ENCODE measurements at regions of chr7 and their contacts with region 1.

Region 1: DNA sequence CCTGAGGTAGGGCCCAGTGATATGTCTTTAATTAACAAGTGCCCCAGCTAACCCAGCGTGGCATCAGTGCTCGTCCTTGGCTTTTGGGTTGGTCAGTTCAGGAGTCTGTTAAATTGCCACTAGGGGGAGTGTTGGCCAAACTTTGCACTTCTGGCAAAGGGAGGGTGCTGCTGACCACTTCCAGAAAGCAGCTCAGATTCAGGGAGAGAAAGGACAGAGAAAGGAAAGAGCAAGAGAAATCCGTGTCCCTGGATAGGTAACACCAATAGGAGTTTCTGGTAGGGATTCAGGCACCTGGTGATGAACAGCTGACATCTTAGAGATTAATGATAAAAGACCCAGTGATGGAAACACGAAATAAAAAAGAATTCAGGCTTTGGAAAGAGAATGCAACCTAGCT is 243.1 kb upstream of the AOAH start:
- DNase-seq: peak; percentile 7
- H3K4me3 ChIP-seq: no peak overlapping the region
- CTCF ChIP-seq: peak; percentile 83

Region 2: DNA sequence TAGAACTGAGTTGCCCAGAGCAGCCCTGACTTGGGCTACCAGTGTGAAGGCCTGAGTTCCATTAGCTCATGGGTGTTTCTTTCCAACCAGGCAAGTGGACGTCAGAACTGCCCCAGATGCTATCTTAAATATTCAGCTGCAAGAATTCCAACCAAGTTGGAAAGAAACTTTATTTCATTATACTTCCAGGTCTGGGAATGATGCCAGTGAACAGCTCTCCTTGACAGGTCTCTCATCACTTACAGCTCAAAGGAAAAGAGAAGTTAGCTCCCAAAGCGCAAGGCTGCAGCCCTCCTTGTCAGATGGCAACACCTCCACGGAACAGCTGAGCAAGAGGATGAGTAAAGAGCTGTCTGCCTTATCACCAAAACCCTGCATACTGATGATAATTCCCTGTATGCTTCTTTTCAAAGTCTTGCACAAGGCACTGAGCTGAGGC is 12.4 kb after region 1 on chr7:
- CTCF ChIA-PET with region 1: interaction called, 47 read pairs
- POLR2A ChIA-PET with region 1: no interaction called
- DNase-seq: no peak
- H3K4me3 ChIP-seq: no peak overlapping the region
- CTCF ChIP-seq: no peak

Region 3: GRCh38 chr7:36986429-36987362 is 19.3 kb after region 1 on chr7:
- CTCF ChIA-PET with region 1: interaction called, 47 read pairs
- POLR2A ChIA-PET with region 1: no interaction called
- DNase-seq: no peak
- H3K4me3 ChIP-seq: no peak overlapping the region
- CTCF ChIP-seq: peak; percentile 93

Region 4: GRCh38 chr7:37173670-37174069 is 206.3 kb after region 1 on chr7:
- CTCF ChIA-PET with region 1: interaction called, 157 read pairs
- POLR2A ChIA-PET with region 1: no interaction called
- DNase-seq: no peak
- H3K4me3 ChIP-seq: no peak overlapping the region
- CTCF ChIP-seq: no peak

Region 5: DNA sequence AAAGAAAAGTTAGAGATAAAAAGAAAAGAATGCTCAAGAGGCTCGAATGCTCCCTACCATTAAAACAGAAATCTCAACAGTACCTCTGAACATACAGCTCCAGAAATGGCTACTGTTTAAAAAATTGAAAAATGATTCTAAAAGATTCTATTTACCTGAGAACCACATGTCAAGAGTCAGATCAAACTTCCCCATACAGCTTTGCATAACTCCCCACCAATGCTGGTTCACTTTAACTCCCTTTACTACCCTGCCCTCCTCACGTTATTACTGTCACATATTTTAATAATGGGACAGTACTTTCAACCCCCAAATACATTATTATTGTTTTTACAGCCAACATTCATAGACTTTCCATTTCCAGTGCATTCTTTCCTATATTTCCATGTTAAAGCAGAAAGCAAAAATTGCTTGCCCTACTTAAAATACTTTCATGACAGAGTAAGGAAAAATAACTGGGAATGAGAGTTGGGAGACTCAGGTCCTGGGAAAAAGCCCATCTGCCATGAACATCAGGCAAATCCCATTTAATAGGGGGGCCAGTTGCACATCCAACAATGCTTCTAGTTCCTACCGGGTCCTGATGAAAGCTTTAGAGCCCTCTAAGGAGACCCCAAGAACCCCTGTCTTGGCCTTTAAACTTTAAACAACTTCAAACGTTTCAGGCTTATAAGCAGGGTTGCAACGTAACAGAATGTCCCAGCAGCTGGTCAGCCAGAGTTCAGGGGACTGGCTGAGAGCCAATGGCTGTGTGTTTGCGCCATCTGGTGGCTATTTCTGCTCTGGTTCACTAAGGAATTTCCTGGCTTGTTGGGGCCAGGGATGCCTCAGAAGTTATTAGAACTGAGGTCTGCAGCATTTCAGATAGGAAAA is 233.9 kb after region 1 on chr7:
- CTCF ChIA-PET with region 1: interaction called, 122 read pairs
- POLR2A ChIA-PET with region 1: no interaction called
- DNase-seq: peak; percentile 14
- H3K4me3 ChIP-seq: no peak overlapping the region
- CTCF ChIP-seq: peak; percentile 81

Measured in AG04449 (cell line).